ENCODE measurements at regions of chr15 and their contacts with region 1.

Region 1: DNA sequence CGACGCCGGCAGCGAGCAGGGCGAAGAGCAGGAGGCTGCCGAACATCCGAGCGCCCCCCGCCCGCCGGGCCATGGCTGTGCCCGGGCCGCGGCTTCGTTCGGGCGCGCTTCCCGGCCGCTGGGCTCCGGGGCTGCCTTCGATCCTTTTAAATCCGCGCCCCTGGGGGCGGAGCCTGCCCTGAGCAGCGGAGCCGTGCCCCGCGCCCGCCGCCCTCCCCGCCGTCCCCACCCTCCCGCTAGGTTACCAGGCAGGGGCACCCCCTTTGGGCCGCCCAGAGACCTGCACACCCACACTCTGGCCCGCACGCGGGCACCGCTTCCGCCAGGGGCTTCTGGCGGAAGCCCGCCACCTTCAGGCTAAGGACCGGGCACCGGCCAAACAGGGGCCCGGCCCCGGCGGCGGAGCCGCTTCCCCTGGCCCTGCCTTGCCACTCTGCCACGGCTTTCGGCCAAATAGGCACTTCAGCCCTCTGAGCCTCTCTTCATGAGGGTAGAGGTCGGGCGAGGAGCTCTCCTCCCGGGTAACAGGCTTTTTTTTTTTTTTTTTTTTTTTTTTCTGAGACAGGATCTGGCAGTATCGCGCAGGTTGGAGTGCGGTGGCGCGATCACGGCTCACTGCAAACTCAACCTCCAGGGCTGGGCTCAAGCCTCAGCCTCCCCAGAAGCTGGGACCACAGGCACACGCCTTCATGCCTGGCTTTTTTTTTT is at the start of gene NMB:
- DNase-seq: peak; percentile 87 to 90 (median 88)
- H3K4me3 ChIP-seq: peak within 1 kb of the TSS; percentile 39 to 44
- H3K4me3 Mint-ChIP-seq: peak within 1 kb of the TSS; percentile 77 to 87 (median 81)
- H3K27ac ChIP-seq: peak within 1 kb of the TSS; percentile 58
- H3K27ac Mint-ChIP-seq: peak within 1 kb of the TSS; percentile 89 to 98 (median 93)
- H3K4me1 ChIP-seq: peaks cover 34% of the 10 kb centered on the region
- H3K4me1 Mint-ChIP-seq: peaks cover 14 to 52% (median 35%) of the 10 kb centered on the region in 4 donors
- H3K27me3 ChIP-seq: no peaks in the 10 kb centered on the region
- H3K27me3 Mint-ChIP-seq: no peaks in the 10 kb centered on the region
- total RNA-seq, gene NMB: 2.4 to 2.5 TPM

Region 2: GRCh38 chr15:84600851-84601838 is 57.1 kb before region 1 on chr15 and contains the start of gene ZSCAN2:
- CTCF ChIA-PET with region 1: interaction called, 15 read pairs
- POLR2A ChIA-PET with region 1: interaction called, 24 read pairs
- intact Hi-C with region 1: loop called (anchors 1 kb)
- DNase-seq: peak; percentile 89 to 94 (median 91)
- H3K4me3 ChIP-seq: peak within 1 kb of the TSS; percentile 85 to 93
- H3K4me3 Mint-ChIP-seq: peak within 1 kb of the TSS; percentile 91 to 99 (median 96)
- H3K27ac ChIP-seq: peak within 1 kb of the TSS; percentile 59
- H3K27ac Mint-ChIP-seq: peak within 1 kb of the TSS; percentile 83 to 96 (median 92)
- H3K4me1 ChIP-seq: peaks cover 50% of the 10 kb centered on the region
- H3K4me1 Mint-ChIP-seq: peaks cover 47 to 77% (median 64%) of the 10 kb centered on the region in 4 donors
- H3K27me3 ChIP-seq: no peaks in the 10 kb centered on the region
- H3K27me3 Mint-ChIP-seq: no peaks in the 10 kb centered on the region
- total RNA-seq, gene ZSCAN2: 11.4 to 14.1 TPM

Region 3: DNA sequence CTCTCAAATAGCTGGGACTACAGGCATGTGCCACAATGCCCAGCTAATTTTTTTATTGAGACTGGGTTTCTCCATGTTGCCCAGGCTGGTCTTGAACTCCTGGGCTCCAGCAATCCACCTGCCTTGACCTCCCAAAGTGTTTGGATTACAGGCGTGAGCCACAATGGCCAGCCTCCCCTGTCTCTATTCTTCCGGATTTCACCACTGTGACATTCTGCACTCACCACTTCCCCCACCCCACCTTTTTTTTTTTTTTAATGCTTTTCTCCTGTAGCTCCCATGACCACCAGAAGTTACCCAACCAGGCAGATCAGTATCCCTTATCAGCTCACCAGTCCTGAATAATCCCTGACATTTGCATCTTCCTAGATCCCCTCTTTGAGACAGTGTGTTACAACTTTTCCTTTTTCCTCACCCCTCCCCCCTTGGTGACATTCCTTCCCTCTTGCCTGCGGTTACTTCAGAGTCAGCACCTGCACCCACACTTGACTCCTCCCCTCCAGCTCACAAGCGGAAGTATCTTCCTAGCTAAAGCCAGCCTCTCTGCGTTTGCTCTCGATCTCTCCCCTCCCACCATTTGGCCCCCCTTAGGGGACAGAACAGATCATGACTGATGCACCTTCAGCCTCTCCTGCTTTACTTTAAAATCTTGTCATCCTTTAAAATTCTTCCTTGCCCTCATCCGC is 76.7 kb after region 1 on chr15:
- CTCF ChIA-PET with region 1: interaction called, 12 read pairs
- POLR2A ChIA-PET with region 1: interaction called, 26 read pairs
- intact Hi-C with region 1: no loop called
- DNase-seq: peak; percentile 72 to 88 (median 77)
- H3K4me3 ChIP-seq: peak overlapping the region; percentile 25 to 46
- H3K4me3 Mint-ChIP-seq: peak overlapping the region; percentile 77 to 90 (median 81)
- H3K27ac ChIP-seq: peak overlapping the region; percentile 41
- H3K27ac Mint-ChIP-seq: peak overlapping the region; percentile 84 to 95 (median 93)
- H3K4me1 ChIP-seq: peaks cover 53% of the 10 kb centered on the region
- H3K4me1 Mint-ChIP-seq: peaks cover 29 to 50% (median 38%) of the 10 kb centered on the region in 4 donors
- H3K27me3 ChIP-seq: no peaks in the 10 kb centered on the region
- H3K27me3 Mint-ChIP-seq: no peaks in the 10 kb centered on the region

Region 4: GRCh38 chr15:84748274-84749110 is 90.3 kb after region 1 on chr15 and contains the start of gene ZNF592:
- CTCF ChIA-PET with region 1: interaction called, 13 read pairs
- POLR2A ChIA-PET with region 1: interaction called, 29 read pairs
- intact Hi-C with region 1: loop called (anchors 1 kb)
- DNase-seq: peak; percentile 78 to 87 (median 80)
- H3K4me3 ChIP-seq: peak within 1 kb of the TSS; percentile 88 to 93
- H3K4me3 Mint-ChIP-seq: peak within 1 kb of the TSS; percentile 93 to 99 (median 98)
- H3K27ac ChIP-seq: peak within 1 kb of the TSS; percentile 80
- H3K27ac Mint-ChIP-seq: peak within 1 kb of the TSS; percentile 97 to 99 (median 99)
- H3K4me1 ChIP-seq: peaks cover 68% of the 10 kb centered on the region
- H3K4me1 Mint-ChIP-seq: peaks cover 52 to 74% (median 64%) of the 10 kb centered on the region in 4 donors
- H3K27me3 ChIP-seq: no peaks in the 10 kb centered on the region
- H3K27me3 Mint-ChIP-seq: no peaks in the 10 kb centered on the region
- total RNA-seq, gene ZNF592: 40.8 to 42.6 TPM

Region 5: DNA sequence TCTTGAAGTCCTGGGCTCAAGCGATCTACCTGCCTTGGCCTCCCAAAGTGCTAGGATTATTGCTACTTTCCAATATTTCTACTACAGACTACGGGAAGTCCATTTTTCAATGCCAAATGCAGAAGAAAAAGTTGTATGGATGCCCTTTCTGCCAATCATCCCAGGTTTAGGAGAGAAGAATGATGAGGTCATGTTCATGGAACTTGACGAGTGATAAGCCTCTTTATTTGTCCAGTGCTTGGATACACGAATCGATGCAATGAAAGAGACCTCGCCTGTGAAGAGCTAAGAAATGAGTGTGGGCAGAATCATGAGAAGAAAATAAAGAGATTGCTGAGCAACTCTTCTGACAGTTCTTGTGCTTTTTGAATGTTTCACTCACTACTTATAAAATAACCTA is 225.2 kb after region 1 on chr15:
- CTCF ChIA-PET with region 1: interaction called, 13 read pairs
- POLR2A ChIA-PET with region 1: no interaction called
- intact Hi-C with region 1: loop called (anchors 1 kb)
- DNase-seq: no peak
- H3K4me3 ChIP-seq: no peak overlapping the region
- H3K4me3 Mint-ChIP-seq: no peak overlapping the region
- H3K27ac ChIP-seq: no peak overlapping the region
- H3K27ac Mint-ChIP-seq: no peak overlapping the region
- H3K4me1 ChIP-seq: no peaks in the 10 kb centered on the region
- H3K4me1 Mint-ChIP-seq: no peaks in the 10 kb centered on the region
- H3K27me3 ChIP-seq: no peaks in the 10 kb centered on the region
- H3K27me3 Mint-ChIP-seq: no peaks in the 10 kb centered on the region

Region 6: GRCh38 chr15:84929744-84930371 is 271.6 kb after region 1 on chr15:
- CTCF ChIA-PET with region 1: interaction called, 12 read pairs
- POLR2A ChIA-PET with region 1: interaction called, 5 read pairs
- intact Hi-C with region 1: loop called (anchors 1 kb)
- DNase-seq: no peak
- H3K4me3 ChIP-seq: no peak overlapping the region
- H3K4me3 Mint-ChIP-seq: no peak overlapping the region
- H3K27ac ChIP-seq: no peak overlapping the region
- H3K27ac Mint-ChIP-seq: peak overlapping the region in 1 of 7 donors; percentile 68
- H3K4me1 ChIP-seq: no peaks in the 10 kb centered on the region
- H3K4me1 Mint-ChIP-seq: peaks cover 4 to 6% (median 5%) of the 10 kb centered on the region in 4 donors
- H3K27me3 ChIP-seq: no peaks in the 10 kb centered on the region
- H3K27me3 Mint-ChIP-seq: no peaks in the 10 kb centered on the region

Region 7: DNA sequence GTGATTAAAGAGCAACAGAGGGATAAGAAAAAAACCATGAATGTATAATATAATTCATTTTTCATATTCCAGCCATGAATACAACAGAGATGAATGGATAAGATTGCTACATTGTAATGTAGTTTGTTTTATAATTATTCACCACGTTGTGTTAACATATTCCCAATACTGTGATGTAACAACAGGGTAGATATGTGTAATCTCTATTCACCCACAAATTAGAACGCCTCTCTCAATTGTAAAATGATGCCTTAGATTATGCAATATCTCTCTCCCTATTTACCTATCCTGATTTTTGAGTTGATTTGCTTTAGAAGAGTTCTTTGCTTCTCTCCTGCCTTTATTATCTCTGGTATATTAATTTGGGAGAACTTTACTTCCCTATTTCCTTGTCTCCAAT is 1615.1 kb after region 1 on chr15:
- CTCF ChIA-PET with region 1: no interaction called
- POLR2A ChIA-PET with region 1: no interaction called
- intact Hi-C with region 1: no loop called
- DNase-seq: no peak
- H3K4me3 ChIP-seq: no peak overlapping the region
- H3K4me3 Mint-ChIP-seq: no peak overlapping the region
- H3K27ac ChIP-seq: no peak overlapping the region
- H3K27ac Mint-ChIP-seq: no peak overlapping the region
- H3K4me1 ChIP-seq: no peaks in the 10 kb centered on the region
- H3K4me1 Mint-ChIP-seq: no peaks in the 10 kb centered on the region
- H3K27me3 ChIP-seq: no peaks in the 10 kb centered on the region
- H3K27me3 Mint-ChIP-seq: peaks cover 3 to 9% of the 10 kb centered on the region in 2 donors